Mammary epithelial cell (primary cell): ENCODE measurements at regions of chr16 and their contacts with region 1.

Region 1: DNA sequence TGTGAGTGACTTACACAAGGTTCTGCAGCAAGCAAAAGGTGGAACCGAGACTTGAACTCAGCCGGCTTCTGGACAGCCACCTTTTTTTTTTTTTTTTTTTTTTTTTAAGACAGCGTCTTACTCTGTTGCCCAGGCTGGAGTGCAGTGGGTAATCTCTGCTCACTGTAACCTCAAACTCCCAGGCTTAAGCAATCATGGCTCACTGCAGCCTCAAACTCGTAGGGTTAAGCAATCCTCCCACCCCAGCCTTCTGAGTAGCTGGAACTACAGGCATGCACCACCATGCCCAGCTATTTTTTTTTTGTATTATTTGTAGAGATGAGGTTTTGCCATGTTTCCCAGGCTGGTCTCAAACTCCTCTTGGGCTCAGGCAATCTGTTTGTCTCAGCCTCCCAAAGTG is 55.2 kb upstream of the GOT2 start:
- DNase-seq: peak; percentile 33
- H3K4me3 ChIP-seq: no peak overlapping the region
- H3K27ac ChIP-seq: no peak overlapping the region
- H3K4me1 ChIP-seq: no peaks in the 10 kb centered on the region
- H3K27me3 ChIP-seq: no peaks in the 10 kb centered on the region
- CTCF ChIP-seq: no peak

Region 2: DNA sequence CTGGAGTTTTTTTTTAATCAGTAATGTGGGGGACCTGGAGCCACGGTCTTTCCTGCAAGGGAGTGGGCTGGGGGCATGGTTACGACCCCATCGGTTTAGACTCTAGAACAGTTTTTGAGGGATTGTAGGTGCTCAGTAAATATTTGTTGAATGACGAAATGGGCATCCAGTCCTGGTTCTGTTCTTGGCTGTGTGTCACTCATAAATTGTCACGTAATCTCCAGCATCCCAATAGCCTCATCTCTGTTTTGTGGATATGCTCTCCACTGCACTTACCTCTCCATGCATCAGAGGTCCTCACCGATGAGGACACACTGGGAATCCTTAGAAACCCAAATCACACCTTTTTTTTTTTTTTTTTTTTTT is 104.3 kb before region 1 on chr16:
- CTCF ChIA-PET with region 1: interaction called, 15 read pairs
- dilution Hi-C with region 1: no loop called
- in situ Hi-C with region 1: no loop called
- intact Hi-C with region 1: no loop called
- DNase-seq: no peak
- H3K4me3 ChIP-seq: peak overlapping the region in 1 of 3 experiments; percentile 93
- H3K27ac ChIP-seq: no peak overlapping the region
- H3K4me1 ChIP-seq: no peaks in the 10 kb centered on the region
- H3K27me3 ChIP-seq: no peaks in the 10 kb centered on the region
- CTCF ChIP-seq: no peak

Region 3: DNA sequence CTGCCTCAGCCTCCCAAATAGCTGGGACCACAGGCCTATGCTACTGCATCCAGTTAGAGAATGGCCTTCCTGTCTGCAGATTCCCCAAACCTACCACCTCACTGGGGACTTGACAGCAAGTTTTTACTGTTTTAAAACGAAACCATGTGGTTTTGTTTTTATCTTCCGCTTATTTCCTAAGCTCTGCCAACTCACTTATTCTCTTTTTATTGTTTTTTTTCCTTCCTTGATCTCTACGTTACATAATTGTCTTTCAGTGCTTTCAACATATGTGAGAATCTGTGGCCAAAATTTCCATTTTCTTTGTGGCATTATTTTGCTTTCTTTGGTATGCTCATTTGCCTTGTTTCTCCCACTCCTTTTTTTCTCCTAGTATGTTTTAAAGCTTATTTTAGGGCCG is 90.2 kb before region 1 on chr16:
- CTCF ChIA-PET with region 1: interaction called, 20 read pairs
- dilution Hi-C with region 1: no loop called
- in situ Hi-C with region 1: no loop called
- intact Hi-C with region 1: no loop called
- DNase-seq: no peak
- H3K4me3 ChIP-seq: no peak overlapping the region
- H3K27ac ChIP-seq: no peak overlapping the region
- H3K4me1 ChIP-seq: no peaks in the 10 kb centered on the region
- H3K27me3 ChIP-seq: no peaks in the 10 kb centered on the region
- CTCF ChIP-seq: no peak

Region 4: DNA sequence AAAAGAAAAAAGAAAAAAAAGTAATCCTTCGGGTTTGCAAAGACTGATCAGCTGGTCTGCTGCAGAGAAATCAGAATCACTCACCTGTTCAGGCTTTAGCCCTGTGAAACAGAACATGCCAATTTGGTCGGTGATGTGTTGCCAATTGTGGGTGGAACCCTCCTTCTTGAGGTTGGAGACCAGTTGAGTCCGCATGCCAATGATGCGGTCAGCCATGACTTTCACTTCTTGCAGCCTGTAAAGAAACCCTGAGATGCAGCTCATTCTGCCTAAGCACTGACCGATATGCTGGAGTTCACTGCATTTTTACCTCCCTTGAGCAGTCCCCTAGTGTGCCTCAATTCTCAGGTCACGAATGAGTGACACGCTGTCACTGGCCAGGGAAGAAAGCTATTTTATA is 80.0 kb before region 1 on chr16:
- CTCF ChIA-PET with region 1: no interaction called
- dilution Hi-C with region 1: no loop called
- in situ Hi-C with region 1: no loop called
- intact Hi-C with region 1: no loop called
- DNase-seq: no peak
- H3K4me3 ChIP-seq: no peak overlapping the region
- H3K27ac ChIP-seq: no peak overlapping the region
- H3K4me1 ChIP-seq: no peaks in the 10 kb centered on the region
- H3K27me3 ChIP-seq: no peaks in the 10 kb centered on the region
- CTCF ChIP-seq: no peak